Calu3 (cell line): ENCODE measurements at regions of chr15 and their contacts with region 1.

Region 1: GRCh38 chr15:37860896-37861295 is 73.5 kb upstream of the TMCO5A start:
- DNase-seq: no peak
- H3K4me3 Mint-ChIP-seq: no peak overlapping the region
- H3K27ac Mint-ChIP-seq: no peak overlapping the region
- H3K4me1 Mint-ChIP-seq: no peaks in the 10 kb centered on the region
- H3K27me3 Mint-ChIP-seq: peaks cover 19% of the 10 kb centered on the region
- CTCF ChIP-seq: no peak

Region 2: DNA sequence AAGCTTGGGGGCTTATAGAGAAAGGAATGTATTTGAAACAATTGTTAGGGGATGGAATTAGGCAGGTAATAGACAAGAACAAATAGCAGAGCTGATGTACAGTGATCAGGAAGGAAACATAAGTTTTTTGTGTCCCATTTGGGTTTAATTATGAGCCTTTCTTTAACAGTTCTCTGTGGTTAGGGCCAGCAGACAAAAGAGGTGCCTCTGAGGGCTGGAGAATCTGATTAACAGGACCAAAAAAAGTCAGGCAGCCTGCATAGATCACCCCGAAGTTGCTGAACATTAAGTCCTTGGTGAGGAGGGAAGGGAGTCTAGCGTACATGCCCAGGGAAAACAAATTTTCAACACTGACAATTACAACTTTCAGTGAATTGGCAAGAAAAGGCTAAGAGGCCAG is 303.2 kb after region 1 on chr15:
- CTCF ChIA-PET with region 1: no interaction called
- intact Hi-C with region 1: loop called (anchors 5 kb)
- DNase-seq: no peak
- H3K4me3 Mint-ChIP-seq: peak overlapping the region; percentile 23
- H3K27ac Mint-ChIP-seq: peak overlapping the region; percentile 10
- H3K4me1 Mint-ChIP-seq: peaks cover 20% of the 10 kb centered on the region
- H3K27me3 Mint-ChIP-seq: no peaks in the 10 kb centered on the region
- CTCF ChIP-seq: no peak